CD4-positive, alpha-beta T cell (primary cell): ENCODE measurements at regions of chr19 and their contacts with region 1.

Region 1: DNA sequence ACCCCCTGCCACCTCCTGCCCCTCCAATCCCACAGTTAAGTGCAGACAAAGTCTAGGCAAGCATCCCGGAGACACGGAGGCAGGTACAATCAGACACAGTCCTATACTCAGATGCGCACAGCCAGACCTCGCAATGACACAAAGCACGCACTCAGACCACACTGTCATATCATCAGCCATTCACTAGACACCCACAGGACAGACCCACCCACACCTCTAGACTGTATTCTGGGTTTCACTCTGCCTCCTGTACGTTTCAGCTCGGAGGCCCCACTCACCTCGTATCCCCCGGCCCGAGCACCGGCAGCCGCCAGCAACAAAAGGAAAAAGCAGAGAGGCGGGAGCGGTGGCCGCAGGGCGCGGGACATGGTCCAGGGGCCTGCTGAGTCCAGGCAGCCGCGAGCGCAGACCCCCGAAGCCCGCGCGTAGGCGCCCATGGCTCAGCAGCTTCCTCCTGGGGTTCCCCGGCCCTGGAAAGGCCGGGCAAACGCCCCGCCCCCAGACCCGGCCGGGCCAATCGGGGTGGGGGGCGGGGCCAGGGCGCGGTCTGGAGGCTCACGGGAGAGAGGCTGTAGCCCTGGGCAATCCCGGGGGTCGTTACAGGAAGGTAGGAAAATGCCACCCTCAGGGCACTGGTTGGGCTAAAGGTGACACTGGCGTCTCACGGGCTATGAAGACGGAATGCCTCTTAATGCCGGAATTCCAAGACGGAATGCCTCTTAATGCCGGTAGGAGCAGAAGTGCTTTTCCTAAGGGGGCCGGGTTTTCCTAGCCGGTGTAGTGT is at the starts of genes MAN2B1 and WDR83:
- DNase-seq: peak; percentile 49 to 92 (median 71)
- ATAC-seq: peak; percentile 69
- H3K4me3 ChIP-seq: peak within 1 kb of the TSS; percentile 94
- H3K4me3 Mint-ChIP-seq: peak within 1 kb of the TSS; percentile 92
- H3K27ac ChIP-seq: peak within 1 kb of the TSS; percentile 82 to 85
- H3K27ac Mint-ChIP-seq: peak within 1 kb of the TSS; percentile 98
- H3K4me1 ChIP-seq: peaks cover 66% of the 10 kb centered on the region
- H3K4me1 Mint-ChIP-seq: peaks cover 48% of the 10 kb centered on the region
- H3K27me3 ChIP-seq: no peaks in the 10 kb centered on the region
- H3K27me3 Mint-ChIP-seq: no peaks in the 10 kb centered on the region
- CTCF ChIP-seq: no peak
- total RNA-seq, gene MAN2B1: 95.9 to 109 TPM
- total RNA-seq, gene WDR83: 6.5 to 6.6 TPM

Region 2: DNA sequence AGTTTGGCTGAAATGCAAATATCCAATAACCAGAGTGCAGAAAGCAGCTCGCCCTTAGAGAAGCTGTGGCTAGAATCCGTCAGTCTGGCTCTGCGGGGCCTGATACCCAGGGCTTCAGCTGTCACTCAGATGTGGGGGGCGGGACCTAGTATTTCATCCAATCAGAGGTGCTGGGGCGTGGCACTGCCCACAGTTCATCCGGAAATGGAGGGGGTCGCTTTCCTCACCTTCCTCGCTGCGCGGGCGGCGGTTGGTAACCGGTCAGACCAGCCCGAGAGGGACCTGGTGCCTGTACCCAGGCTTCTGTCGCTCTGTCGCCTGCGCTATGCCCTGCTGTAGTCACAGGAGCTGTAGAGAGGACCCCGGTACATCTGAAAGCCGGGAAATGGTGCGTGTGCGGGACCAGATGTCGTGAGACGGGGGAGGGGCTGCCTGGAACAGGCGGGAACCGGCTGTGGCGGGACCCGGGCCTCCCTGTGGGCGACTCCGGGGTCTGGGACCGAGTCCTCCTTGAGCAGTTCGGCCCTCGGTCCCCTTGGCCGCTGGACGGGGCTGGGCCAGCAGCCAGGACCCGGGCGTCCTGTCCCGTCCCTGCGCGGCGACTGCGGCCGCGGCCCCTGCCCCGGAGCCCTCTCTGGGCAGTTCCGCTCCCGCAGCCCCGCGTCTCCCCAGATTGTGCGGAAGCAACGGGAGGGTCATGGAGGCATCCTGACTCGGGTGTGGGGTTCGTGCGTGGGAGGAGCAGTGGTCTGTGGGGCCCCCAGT is 741.4 kb before region 1 on chr19 and contains the start of gene ZNF700:
- CTCF ChIA-PET with region 1: no interaction called
- POLR2A ChIA-PET with region 1: no interaction called
- intact Hi-C with region 1: loop called in 1 of 2 experiments (anchors 5 kb)
- DNase-seq: peak; percentile 82 to 94 (median 89)
- ATAC-seq: peak; percentile 86
- H3K4me3 ChIP-seq: peak within 1 kb of the TSS; percentile 96
- H3K4me3 Mint-ChIP-seq: peak within 1 kb of the TSS; percentile 98
- H3K27ac ChIP-seq: peak within 1 kb of the TSS; percentile 88 to 90
- H3K27ac Mint-ChIP-seq: peak within 1 kb of the TSS; percentile 96
- H3K4me1 ChIP-seq: peaks cover 43% of the 10 kb centered on the region
- H3K4me1 Mint-ChIP-seq: peaks cover 42% of the 10 kb centered on the region
- H3K27me3 ChIP-seq: no peaks in the 10 kb centered on the region
- H3K27me3 Mint-ChIP-seq: no peaks in the 10 kb centered on the region
- CTCF ChIP-seq: no peak
- total RNA-seq, gene ZNF700: 13.2 to 14.5 TPM

Region 3: DNA sequence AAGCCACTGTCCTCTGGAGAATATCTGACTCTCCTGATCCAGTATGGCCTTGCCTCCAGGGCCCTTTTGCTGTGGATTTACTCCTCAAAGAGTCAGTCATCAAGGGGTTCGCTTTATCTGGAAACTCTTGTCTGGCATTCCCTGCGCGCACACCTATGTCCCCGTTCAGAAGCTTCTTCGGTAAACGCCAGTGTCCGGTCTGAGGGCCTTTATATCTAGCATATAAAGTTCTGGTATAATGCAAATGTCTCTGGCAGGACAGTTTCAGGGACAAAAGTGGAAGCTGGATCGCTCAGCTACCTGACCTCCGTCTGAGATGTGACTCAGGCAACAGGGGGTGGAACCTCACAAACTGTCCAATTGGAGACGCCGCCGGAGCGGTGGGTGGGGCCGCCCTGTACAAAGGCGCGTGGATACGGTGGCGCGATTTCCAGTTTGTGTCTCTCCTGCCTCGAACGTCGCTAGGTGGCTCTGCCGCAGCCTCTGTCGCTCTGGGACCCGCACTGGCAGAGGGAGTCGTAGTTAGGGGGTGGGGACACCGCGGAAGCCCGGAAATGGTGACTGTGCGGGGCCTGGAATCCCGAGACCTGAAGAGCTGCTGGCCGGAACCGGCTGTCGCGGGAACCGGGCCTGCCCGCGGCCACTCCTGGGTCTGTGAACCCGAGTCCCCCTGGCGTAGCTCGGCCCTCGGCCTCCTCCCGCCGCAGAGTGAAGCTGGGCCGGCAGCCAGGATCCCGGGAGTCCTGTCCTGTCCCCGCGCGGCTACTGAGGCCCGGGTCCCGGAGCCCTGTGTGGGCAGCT is 171.3 kb before region 1 on chr19:
- CTCF ChIA-PET with region 1: interaction called, 4 read pairs
- POLR2A ChIA-PET with region 1: interaction called, 3 read pairs
- intact Hi-C with region 1: loop called in 1 of 2 experiments (anchors 5 kb)
- DNase-seq: peak; percentile 85 to 97 (median 91)
- ATAC-seq: peak; percentile 99
- H3K4me3 ChIP-seq: peak overlapping the region; percentile 67
- H3K4me3 Mint-ChIP-seq: peak overlapping the region; percentile 91
- H3K27ac ChIP-seq: peak overlapping the region; percentile 63 to 68
- H3K27ac Mint-ChIP-seq: peak overlapping the region; percentile 42
- H3K4me1 ChIP-seq: peaks cover 13% of the 10 kb centered on the region
- H3K4me1 Mint-ChIP-seq: peaks cover 12% of the 10 kb centered on the region
- H3K27me3 ChIP-seq: no peaks in the 10 kb centered on the region
- H3K27me3 Mint-ChIP-seq: no peaks in the 10 kb centered on the region
- CTCF ChIP-seq: peak; percentile 47

Region 4: GRCh38 chr19:12628040-12629022 is 38.1 kb before region 1 on chr19:
- CTCF ChIA-PET with region 1: interaction called, 3 read pairs
- POLR2A ChIA-PET with region 1: interaction called, 3 read pairs
- intact Hi-C with region 1: loop called in 1 of 2 experiments (anchors 5 kb)
- DNase-seq: no peak
- ATAC-seq: no peak
- H3K4me3 ChIP-seq: no peak overlapping the region
- H3K4me3 Mint-ChIP-seq: no peak overlapping the region
- H3K27ac ChIP-seq: no peak overlapping the region
- H3K27ac Mint-ChIP-seq: no peak overlapping the region
- H3K4me1 ChIP-seq: no peaks in the 10 kb centered on the region
- H3K4me1 Mint-ChIP-seq: peaks cover 11% of the 10 kb centered on the region
- H3K27me3 ChIP-seq: no peaks in the 10 kb centered on the region
- H3K27me3 Mint-ChIP-seq: no peaks in the 10 kb centered on the region
- CTCF ChIP-seq: no peak

Region 5: DNA sequence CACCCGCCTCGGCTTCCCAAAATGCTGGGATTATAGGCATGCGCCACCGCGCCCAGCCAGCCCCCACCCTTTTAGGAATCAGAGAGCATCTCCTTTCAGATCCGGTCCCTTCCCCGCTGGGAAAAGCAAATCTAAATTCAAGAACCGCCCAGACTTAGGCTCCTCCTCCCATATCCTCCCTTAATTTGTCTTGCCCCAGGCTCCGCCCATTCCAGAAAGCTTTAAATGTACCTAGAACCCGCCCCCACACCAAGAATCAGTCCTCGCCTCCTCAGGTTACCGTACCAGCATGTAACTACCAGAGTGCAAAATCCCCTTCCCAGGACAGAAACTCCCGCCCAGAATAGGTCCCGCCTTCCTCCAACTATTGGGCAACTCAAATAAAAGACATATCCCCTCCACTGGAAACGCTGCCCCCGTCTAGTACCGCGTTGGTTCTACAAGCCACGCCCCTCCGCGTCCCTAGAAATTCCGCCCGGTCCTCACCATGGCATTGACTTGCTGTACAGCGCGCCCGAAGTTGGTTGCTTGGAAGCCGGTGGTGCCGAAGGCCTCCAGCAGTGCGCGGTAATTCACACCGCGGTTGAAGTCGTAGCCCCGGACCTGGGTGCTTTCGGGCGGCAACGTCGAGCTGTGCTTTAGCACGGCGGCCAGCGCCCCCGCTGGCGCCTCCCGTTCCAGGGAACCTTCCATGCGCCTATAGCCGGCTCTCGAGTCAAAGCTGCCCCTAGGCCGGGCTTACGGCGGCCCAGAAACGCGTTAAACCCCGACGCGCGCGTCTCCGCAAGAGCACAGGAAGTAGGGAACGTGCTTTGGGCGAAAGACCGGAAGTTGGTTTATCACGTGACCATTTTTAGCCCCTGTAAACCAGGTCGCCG is 14.9 kb after region 1 on chr19 and contains the start of gene DHPS:
- CTCF ChIA-PET with region 1: interaction called, 4 read pairs
- POLR2A ChIA-PET with region 1: interaction called, 28 read pairs
- intact Hi-C with region 1: loop called in 1 of 2 experiments (anchors 1 kb)
- DNase-seq: peak; percentile 76 to 99 (median 88)
- ATAC-seq: peak; percentile 78
- H3K4me3 ChIP-seq: peak within 1 kb of the TSS; percentile 93
- H3K4me3 Mint-ChIP-seq: peak within 1 kb of the TSS; percentile 94
- H3K27ac ChIP-seq: peak within 1 kb of the TSS; percentile 94 to 98
- H3K27ac Mint-ChIP-seq: peak within 1 kb of the TSS; percentile 86
- H3K4me1 ChIP-seq: peaks cover 40% of the 10 kb centered on the region
- H3K4me1 Mint-ChIP-seq: peaks cover 32% of the 10 kb centered on the region
- H3K27me3 ChIP-seq: no peaks in the 10 kb centered on the region
- H3K27me3 Mint-ChIP-seq: no peaks in the 10 kb centered on the region
- CTCF ChIP-seq: no peak
- total RNA-seq, gene DHPS: 112 to 113 TPM

Region 6: GRCh38 chr19:12881172-12881808 is 214.8 kb after region 1 on chr19 and contains the start of gene DNASE2:
- CTCF ChIA-PET with region 1: no interaction called
- POLR2A ChIA-PET with region 1: no interaction called
- intact Hi-C with region 1: no loop called
- DNase-seq: peak; percentile 73 to 95 (median 86)
- ATAC-seq: peak; percentile 74
- H3K4me3 ChIP-seq: peak within 1 kb of the TSS; percentile 89
- H3K4me3 Mint-ChIP-seq: peak within 1 kb of the TSS; percentile 89
- H3K27ac ChIP-seq: peak within 1 kb of the TSS; percentile 46 to 58
- H3K27ac Mint-ChIP-seq: peak within 1 kb of the TSS; percentile 86
- H3K4me1 ChIP-seq: peaks cover 52% of the 10 kb centered on the region
- H3K4me1 Mint-ChIP-seq: peaks cover 23% of the 10 kb centered on the region
- H3K27me3 ChIP-seq: no peaks in the 10 kb centered on the region
- H3K27me3 Mint-ChIP-seq: no peaks in the 10 kb centered on the region
- CTCF ChIP-seq: no peak
- total RNA-seq, gene DNASE2: 10.4 to 11.1 TPM